Right ventricle myocardium inferior (tissue), 1 donor: ENCODE measurements at regions of chr3 and their contacts with region 1.

Region 1: DNA sequence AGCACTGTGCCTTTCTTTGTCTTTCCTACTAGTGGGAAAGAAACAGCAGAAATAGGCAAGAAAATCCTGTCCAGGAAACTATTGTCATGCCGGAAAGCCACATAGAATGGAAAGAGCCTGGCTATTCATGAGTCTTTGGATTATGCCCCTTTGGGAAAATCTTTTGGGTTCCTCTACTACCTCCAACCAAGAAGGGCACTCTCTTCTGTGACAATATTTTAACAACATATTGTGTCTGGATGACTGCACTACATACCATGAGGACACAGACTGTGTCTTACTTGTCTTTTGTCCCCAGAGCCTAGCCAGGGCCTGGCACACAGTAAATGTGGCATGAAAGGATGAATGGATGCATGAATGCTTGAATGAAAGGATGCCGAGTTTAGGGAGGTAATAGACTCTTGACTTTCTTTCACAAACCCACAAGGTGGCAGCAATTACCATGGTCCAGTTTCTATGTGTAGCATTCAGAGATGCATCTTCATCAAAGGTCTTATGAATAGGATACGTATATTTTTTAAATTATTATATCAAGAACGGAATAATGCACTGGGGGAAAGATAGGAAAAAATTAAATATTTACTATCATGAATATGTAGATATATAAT is 30.3 kb downstream of the ARL14 start:
- DNase-seq: no peak
- ATAC-seq: peak; percentile 71

Region 2: GRCh38 chr3:160577556-160578195 is 129.6 kb before region 1 on chr3:
- intact Hi-C with region 1: loop called (anchors 10 kb)
- DNase-seq: no peak
- ATAC-seq: peak; percentile 82

Region 3: GRCh38 chr3:160780245-160780644 is 73.0 kb after region 1 on chr3:
- intact Hi-C with region 1: no loop called
- DNase-seq: no peak
- ATAC-seq: peak; percentile 23

Region 4: DNA sequence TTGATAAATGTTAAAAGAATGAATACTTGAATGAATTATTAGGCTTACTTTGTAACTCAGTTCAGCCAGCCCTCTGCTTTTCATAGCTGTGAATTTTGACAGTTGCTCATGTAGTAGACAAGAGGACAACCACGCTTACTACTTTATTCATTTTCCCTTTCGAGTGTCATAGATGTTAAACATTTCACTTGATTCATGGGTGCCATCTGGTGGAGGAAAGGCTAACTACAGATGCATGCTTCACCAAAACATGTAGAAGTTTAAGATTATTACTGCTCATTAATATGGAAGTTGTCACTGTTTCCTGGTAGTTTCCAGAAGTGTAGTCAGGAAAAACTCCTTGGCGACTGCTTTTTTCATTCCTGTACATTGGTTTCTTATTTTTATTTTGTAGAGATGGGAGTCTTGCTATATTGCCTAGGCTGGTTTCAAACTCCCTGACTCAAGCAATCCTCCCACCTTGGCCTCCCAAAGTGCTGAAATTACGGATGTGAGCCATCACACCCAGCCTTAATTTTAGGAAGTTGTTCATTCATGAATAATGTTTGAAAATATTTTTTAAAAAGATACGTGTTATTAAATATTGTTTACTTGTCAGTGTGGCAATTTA is 234.7 kb after region 1 on chr3:
- intact Hi-C with region 1: loop called (anchors 1 kb)
- DNase-seq: no peak
- ATAC-seq: peak; percentile 72

Region 5: GRCh38 chr3:161423911-161424522 is 716.7 kb after region 1 on chr3:
- intact Hi-C with region 1: loop called (anchors 10 kb)
- DNase-seq: no peak
- ATAC-seq: no peak